ENCODE measurements at regions of chr4 and their contacts with region 1.

Region 1: DNA sequence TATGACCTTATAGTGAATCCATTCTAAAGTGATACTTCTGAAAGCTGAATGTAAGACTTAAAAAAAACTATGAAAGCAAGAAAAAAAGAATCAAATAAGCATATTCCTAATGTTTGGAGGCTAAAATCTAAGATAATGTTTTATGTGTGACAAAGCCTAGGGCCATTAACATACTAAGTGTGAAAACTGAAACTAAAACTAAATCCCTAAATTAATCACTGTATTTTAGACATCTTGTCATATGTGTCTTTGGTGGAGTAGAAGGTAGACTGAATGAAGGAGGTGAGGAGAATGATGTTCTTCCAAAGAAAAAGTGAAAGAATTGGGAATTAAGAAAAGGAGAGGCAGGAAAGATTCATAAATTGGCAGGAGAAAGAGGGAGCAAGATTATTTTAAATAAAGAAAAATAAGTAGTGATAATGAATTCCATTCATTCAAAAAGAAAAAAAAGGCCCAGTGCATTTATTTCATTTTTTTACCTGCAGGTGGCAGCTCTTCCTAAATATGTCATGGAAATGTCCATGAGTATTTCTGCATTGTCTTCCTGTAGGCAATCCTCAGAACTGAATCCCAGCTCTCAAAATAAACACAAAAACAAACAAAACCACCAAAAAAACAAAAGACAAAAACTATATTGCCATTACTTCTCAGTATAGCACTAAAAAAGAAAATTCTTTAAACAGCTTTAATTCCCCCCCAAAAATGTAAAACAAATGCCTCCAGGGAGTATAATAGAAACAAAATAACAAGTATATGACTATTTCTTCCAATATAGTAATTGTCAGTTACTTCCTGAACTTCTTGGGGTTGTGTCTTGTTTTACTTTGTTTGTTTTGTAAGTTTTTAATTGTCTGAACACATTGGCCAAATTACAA is 17.0 kb upstream of the AP1AR start:
- DNase-seq: peak; percentile 21
- H3K4me3 ChIP-seq: no peak overlapping the region
- H3K27ac ChIP-seq: peak overlapping the region; percentile 5
- H3K4me1 ChIP-seq: peaks cover 12% of the 10 kb centered on the region
- H3K27me3 ChIP-seq: no peaks in the 10 kb centered on the region
- CTCF ChIP-seq: peak; percentile 31 to 57

Region 2: GRCh38 chr4:112266821-112267220 is 52.2 kb after region 1 on chr4:
- CTCF ChIA-PET with region 1: no interaction called
- dilution Hi-C with region 1: no loop called
- in situ Hi-C with region 1: no loop called
- intact Hi-C with region 1: loop called (anchors 1 kb)
- DNase-seq: peak; percentile 14
- H3K4me3 ChIP-seq: no peak overlapping the region
- H3K27ac ChIP-seq: no peak overlapping the region
- H3K4me1 ChIP-seq: peaks cover 14% of the 10 kb centered on the region
- H3K27me3 ChIP-seq: no peaks in the 10 kb centered on the region
- CTCF ChIP-seq: peak; percentile 44 to 46

Region 3: DNA sequence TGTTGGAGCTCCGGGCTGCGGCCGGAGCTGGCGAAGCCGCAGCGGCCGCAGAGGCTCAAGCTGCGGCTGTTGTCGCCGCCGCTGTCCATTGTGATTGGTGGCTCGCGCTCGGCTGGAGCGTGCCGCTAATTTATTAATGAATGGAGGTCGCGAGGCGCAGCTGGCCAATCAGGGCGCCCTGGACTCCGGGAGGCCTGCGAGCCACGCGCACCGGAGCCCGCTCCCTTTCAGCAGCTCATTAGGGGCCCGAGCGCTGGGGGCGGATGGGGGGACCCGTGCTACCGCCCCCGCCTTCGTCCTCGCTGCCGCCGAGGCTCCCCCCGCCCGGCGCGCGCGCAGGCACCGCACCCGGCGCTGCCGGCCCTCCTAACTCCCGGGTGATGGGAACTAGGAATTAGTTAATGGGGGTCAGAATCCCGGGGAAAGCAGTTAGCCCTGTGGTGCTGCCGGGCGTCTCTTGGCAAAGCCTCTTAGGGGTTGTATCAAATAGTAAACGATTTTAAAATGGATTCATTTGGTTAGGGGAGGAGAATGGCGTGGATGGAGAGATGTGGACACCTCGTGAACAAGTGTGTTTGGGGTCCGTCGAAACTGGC is 301.9 kb after region 1 on chr4:
- CTCF ChIA-PET with region 1: interaction called, 10 read pairs
- dilution Hi-C with region 1: no loop called
- in situ Hi-C with region 1: no loop called
- intact Hi-C with region 1: no loop called
- DNase-seq: no peak
- H3K4me3 ChIP-seq: peak overlapping the region; percentile 12 to 25 (median 24)
- H3K27ac ChIP-seq: no peak overlapping the region
- H3K4me1 ChIP-seq: peaks cover 29% of the 10 kb centered on the region
- H3K27me3 ChIP-seq: peaks cover 56% of the 10 kb centered on the region
- CTCF ChIP-seq: no peak